ENCODE measurements at regions of chr3 and their contacts with region 1.

Region 1: DNA sequence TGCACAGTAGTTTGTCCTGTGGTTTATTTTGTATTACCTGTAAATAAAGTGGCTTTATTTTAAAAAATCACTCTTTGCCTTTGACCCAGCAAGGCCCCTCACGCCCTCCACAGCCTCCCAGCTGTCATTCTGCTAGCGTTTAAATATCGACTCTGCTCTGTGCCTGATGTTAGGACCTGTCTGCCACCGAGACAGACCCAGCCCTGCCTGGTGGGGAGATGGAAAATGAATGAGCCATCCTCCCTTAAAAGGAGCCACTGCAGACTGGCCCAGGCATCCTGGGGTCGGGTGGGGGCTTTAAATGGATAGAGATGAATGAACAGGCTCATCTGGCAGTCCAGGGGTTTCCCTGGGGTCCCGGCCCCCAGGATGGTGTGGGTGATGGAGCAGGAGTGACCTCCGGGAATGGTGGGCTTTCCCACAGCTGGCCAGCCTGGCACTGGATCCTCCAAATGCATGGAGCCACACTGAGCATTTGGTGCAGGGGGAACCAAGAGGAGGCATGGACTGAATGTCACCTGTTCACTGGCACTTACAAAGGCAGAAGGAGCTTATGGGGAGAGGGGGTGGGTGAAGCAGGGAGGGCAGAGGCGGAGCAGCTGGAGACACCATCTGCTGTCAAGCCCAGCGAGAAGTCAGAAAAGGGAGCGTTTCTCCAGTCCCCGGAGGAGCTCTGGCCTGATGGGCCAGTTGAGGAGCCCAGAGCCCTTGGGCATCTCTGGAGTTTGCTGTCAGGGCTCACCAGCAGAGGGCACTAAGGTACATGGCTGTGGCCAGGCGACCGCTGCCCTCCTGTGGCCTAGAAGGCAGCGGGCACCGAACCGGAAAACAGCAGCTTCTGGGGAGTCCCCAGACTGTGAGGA is 11.9 kb downstream of the GRM2 start:
- DNase-seq: peak; percentile 86
- ATAC-seq: peak; percentile 86
- H3K4me3 Mint-ChIP-seq: no peak overlapping the region
- H3K27ac Mint-ChIP-seq: peak overlapping the region; percentile 36
- H3K4me1 Mint-ChIP-seq: peaks cover 40% of the 10 kb centered on the region
- H3K27me3 Mint-ChIP-seq: no peaks in the 10 kb centered on the region

Region 2: GRCh38 chr3:51729042-51729633 is 10.4 kb after region 1 on chr3:
- CTCF ChIA-PET with region 1: interaction called, 30 read pairs
- POLR2A ChIA-PET with region 1: no interaction called
- DNase-seq: no peak
- ATAC-seq: no peak
- H3K4me3 Mint-ChIP-seq: no peak overlapping the region
- H3K27ac Mint-ChIP-seq: peak overlapping the region; percentile 7
- H3K4me1 Mint-ChIP-seq: peaks cover 31% of the 10 kb centered on the region
- H3K27me3 Mint-ChIP-seq: no peaks in the 10 kb centered on the region

Region 3: DNA sequence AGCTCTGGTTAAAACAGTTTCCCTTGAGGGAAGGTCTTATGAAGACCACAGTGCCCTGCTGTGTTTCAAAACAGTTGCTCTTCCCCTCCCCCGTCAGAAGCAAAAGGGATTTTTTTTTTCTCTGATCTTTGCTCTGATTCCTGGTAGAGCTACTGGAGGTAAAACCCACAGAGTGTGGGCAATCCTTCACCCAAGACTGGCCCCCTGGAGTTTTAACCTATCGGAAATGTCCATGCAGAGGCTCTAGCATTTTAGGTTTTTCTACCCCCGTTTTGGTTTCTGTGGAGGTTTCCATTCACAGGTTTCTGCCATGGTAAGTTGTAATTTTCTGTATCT is 15.8 kb after region 1 on chr3:
- CTCF ChIA-PET with region 1: interaction called, 30 read pairs
- POLR2A ChIA-PET with region 1: no interaction called
- DNase-seq: peak; percentile 70
- ATAC-seq: peak; percentile 94
- H3K4me3 Mint-ChIP-seq: peak overlapping the region; percentile 17
- H3K27ac Mint-ChIP-seq: peak overlapping the region; percentile 67
- H3K4me1 Mint-ChIP-seq: peaks cover 33% of the 10 kb centered on the region
- H3K27me3 Mint-ChIP-seq: peaks cover 9% of the 10 kb centered on the region

Region 4: DNA sequence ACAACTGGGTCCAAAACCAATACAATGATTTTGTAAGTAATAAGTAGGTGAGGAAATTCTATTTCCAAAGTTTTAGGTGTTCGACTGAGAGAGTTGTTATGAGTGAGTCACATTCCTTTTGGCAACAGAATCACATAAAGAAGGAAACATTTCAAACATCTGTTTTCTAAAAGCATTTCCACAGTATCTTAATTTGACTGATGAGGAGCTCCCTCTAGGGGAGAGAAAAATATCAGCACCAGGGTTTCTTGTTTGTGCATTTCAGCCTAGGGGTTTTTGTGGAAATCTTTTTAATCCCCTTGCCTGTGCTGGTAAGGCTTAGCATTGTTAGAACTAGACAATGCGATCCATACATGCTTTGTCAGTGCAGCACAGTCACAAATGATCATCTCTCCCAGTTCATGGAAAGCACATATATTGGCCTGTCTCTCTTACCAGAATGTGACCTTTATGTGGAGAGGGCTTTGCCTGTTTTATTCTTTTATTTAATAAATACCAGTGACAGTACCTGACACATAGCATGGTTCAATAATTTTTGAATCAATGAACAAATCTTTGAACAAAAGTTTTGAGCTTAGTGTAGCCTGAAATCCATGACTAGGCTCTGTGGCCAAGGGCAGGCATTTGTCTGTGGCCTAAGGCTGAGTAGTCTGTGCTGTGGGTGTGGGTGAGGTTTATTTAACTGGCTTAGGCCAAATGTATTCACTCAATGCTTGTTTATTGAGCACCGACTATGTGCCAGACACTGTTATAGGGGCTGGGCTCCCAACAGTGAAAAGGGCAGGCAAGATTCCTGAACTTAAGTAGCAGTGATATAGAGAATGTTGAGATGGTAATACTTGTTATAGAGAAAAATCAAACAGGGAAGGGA is 81.3 kb after region 1 on chr3:
- CTCF ChIA-PET with region 1: interaction called, 146 read pairs
- POLR2A ChIA-PET with region 1: no interaction called
- DNase-seq: peak; percentile 63
- ATAC-seq: peak; percentile 52
- H3K4me3 Mint-ChIP-seq: no peak overlapping the region
- H3K27ac Mint-ChIP-seq: no peak overlapping the region
- H3K4me1 Mint-ChIP-seq: peaks cover 48% of the 10 kb centered on the region
- H3K27me3 Mint-ChIP-seq: peaks cover 10% of the 10 kb centered on the region

Measured in activated CD8-positive, alpha-beta T cell treated with anti-CD3 and anti-CD28 coated beads, Interleukin-2, amount 10 ng/mL, durations not matched to agents 7 days and 5 days (primary cell).